ENCODE measurements at regions of chr6 and their contacts with region 1.

Region 1: GRCh38 chr6:83057705-83058321 is 7.8 kb downstream of the UBE3D start:
- DNase-seq: peak; percentile 57
- H3K4me3 ChIP-seq: no peak overlapping the region
- H3K27ac ChIP-seq: no peak overlapping the region
- H3K4me1 ChIP-seq: peaks cover 10 to 19% of the 10 kb centered on the region in 2 experiments; a peak in 3 of 4 replicates
- H3K27me3 ChIP-seq: no peaks in the 10 kb centered on the region
- CTCF ChIP-seq: peak; percentile 92
- EP300 ChIP-seq: no peak
- RAD21 ChIP-seq: peak; percentile 86

Region 2: GRCh38 chr6:82247634-82248232 is 810.1 kb before region 1 on chr6 and contains the start of gene IBTK:
- CTCF ChIA-PET with region 1: interaction called, 26 read pairs
- POLR2A ChIA-PET with region 1: interaction called, 3 read pairs
- DNase-seq: peak; percentile 97
- H3K4me3 ChIP-seq: peak within 1 kb of the TSS; percentile 88
- H3K27ac ChIP-seq: peak within 1 kb of the TSS; percentile 93 to 96
- H3K4me1 ChIP-seq: peaks cover 12 to 21% of the 10 kb centered on the region in 2 experiments
- H3K27me3 ChIP-seq: no peaks in the 10 kb centered on the region
- CTCF ChIP-seq: no peak
- EP300 ChIP-seq: no peak
- RAD21 ChIP-seq: no peak
- polyA plus RNA-seq, gene IBTK: 9.5 and 14.5 TPM in 2 replicates

Region 3: DNA sequence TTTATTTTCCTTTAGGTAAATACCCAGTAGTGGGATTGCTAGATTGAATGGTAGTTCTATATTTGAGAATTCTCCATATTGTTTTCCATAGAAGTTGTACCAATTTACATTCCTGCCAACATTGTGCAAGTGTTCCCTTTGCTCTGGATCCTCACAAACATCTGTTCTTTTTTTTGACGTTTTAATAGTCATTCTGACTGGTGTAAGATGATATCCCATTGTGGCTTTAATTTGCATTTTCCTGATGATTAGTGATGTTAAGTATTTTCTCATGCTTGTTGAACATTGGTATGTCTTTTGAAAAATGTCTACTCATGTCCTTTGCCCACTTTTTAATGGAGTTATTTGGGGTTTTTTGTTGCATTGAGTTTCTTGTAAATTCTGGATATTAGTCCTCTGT is 77.7 kb before region 1 on chr6:
- CTCF ChIA-PET with region 1: no interaction called
- POLR2A ChIA-PET with region 1: no interaction called
- DNase-seq: no peak
- H3K4me3 ChIP-seq: no peak overlapping the region
- H3K27ac ChIP-seq: peak overlapping the region in 1 of 2 experiments; percentile 46; a peak in 2 of 4 replicates
- H3K4me1 ChIP-seq: peaks cover 0 to 9% of the 10 kb centered on the region in 2 experiments; a peak in 1 of 4 replicates
- H3K27me3 ChIP-seq: no peaks in the 10 kb centered on the region
- CTCF ChIP-seq: no peak
- EP300 ChIP-seq: no peak
- RAD21 ChIP-seq: no peak

Region 4: DNA sequence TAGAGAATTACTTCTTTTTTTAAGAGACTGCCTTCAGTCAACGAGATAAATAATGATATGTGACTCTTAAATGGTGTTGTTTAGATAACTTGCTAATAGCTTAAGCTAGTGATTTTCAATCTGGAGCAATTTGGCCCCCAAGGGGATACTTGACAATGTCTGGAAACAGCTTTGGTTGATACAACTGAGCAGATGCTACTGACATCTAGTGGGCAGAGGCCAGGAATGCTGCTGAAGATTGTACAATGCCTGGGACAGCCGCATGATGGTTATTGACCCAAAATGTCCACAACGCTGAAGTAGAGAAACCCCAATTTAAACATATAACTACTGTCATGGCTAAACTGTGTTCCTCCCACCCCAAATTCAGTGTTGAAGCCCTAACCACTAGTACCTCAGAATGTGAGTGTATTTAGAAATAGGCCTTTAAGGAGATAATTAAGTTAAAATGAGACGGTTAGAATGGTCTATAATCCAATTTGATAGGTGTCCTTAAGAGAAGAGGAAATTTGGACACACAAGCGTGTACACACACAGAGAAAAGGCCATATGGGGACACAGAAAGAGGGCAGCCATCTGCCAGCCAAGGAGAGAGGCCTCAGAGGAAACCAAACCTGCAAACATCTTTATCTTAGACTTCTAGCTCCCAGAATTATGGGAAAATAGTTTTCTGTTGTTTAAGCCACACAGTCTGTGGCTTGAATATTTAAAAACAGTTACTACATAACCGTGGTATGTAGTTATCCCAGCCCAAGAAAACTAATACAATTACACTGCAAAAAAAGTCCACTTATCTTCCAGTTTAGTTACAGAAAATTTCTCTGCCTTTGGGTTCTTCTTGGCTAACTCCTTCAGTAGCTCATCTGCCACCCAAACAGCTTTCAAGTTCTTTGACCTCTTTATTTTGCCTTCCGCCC is 157.6 kb after region 1 on chr6:
- CTCF ChIA-PET with region 1: interaction called, 328 read pairs
- POLR2A ChIA-PET with region 1: no interaction called
- DNase-seq: peak; percentile 51
- H3K4me3 ChIP-seq: peak overlapping the region in 1 of 2 experiments; percentile 16; a peak in 1 of 4 replicates
- H3K27ac ChIP-seq: peak overlapping the region; percentile 64 to 72
- H3K4me1 ChIP-seq: peaks cover 6 to 9% of the 10 kb centered on the region in 2 experiments; a peak in 3 of 4 replicates
- H3K27me3 ChIP-seq: no peaks in the 10 kb centered on the region
- CTCF ChIP-seq: peak; percentile 95
- EP300 ChIP-seq: no peak
- RAD21 ChIP-seq: peak; percentile 88

Measured in SK-N-SH (cell line).